Activated CD8-positive, alpha-beta T cell treated with anti-CD3 and anti-CD28 coated beads for 36 hours (primary cell): ENCODE measurements at regions of chr9 and their contacts with region 1.

Region 1: GRCh38 chr9:105359892-105360291 is 87.9 kb upstream of the FSD1L start:
- DNase-seq: peak; percentile 86
- ATAC-seq: peak; percentile 87
- H3K4me3 Mint-ChIP-seq: no peak overlapping the region
- H3K27ac Mint-ChIP-seq: no peak overlapping the region
- H3K4me1 Mint-ChIP-seq: peaks cover 18% of the 10 kb centered on the region
- H3K27me3 Mint-ChIP-seq: no peaks in the 10 kb centered on the region
- CTCF ChIP-seq: no peak

Region 2: GRCh38 chr9:105330755-105331154 is 29.1 kb before region 1 on chr9:
- CTCF ChIA-PET with region 1: no interaction called
- POLR2A ChIA-PET with region 1: no interaction called
- intact Hi-C with region 1: no loop called
- DNase-seq: no peak
- ATAC-seq: no peak
- H3K4me3 Mint-ChIP-seq: no peak overlapping the region
- H3K27ac Mint-ChIP-seq: no peak overlapping the region
- H3K4me1 Mint-ChIP-seq: no peaks in the 10 kb centered on the region
- H3K27me3 Mint-ChIP-seq: no peaks in the 10 kb centered on the region
- CTCF ChIP-seq: no peak

Region 3: GRCh38 chr9:105405514-105406131 is 45.7 kb after region 1 on chr9:
- CTCF ChIA-PET with region 1: interaction called, 4 read pairs
- POLR2A ChIA-PET with region 1: no interaction called
- intact Hi-C with region 1: loop called (anchors 2 kb)
- DNase-seq: peak; percentile 76
- ATAC-seq: peak; percentile 88
- H3K4me3 Mint-ChIP-seq: peak overlapping the region; percentile 37
- H3K27ac Mint-ChIP-seq: peak overlapping the region; percentile 81
- H3K4me1 Mint-ChIP-seq: peaks cover 26% of the 10 kb centered on the region
- H3K27me3 Mint-ChIP-seq: peaks cover 61% of the 10 kb centered on the region
- CTCF ChIP-seq: no peak